Activated B cell treated with CpG ODN at 0.5 μM for 24 hours (primary cell): ENCODE measurements at regions of chr12 and their contacts with region 1.

Region 1: GRCh38 chr12:79900951-79901350 is 33.9 kb downstream of the PPP1R12A start:
- DNase-seq: no peak
- ATAC-seq: no peak
- H3K4me3 Mint-ChIP-seq: no peak overlapping the region
- H3K27ac Mint-ChIP-seq: no peak overlapping the region
- H3K4me1 Mint-ChIP-seq: peaks cover 51% of the 10 kb centered on the region
- H3K27me3 Mint-ChIP-seq: no peaks in the 10 kb centered on the region
- CTCF ChIP-seq: no peak

Region 2: DNA sequence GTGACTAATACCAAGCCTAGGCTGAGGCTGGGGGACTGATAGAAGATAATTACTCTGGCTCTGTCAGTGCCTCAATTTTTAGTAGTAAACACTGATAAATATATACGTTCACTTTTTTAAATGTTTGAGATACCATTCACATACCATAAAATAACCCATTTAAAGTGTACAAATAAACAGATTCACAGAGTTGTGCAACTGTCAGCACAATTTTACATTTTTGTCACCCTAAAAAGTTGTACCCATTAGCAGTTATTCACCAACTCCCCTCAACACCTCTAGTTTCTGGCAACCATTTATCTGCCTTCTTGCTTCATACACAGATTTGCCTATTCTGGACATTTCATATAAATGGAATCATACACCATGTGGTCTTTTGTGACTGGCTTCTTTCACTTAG is 18.8 kb after region 1 on chr12:
- CTCF ChIA-PET with region 1: no interaction called
- POLR2A ChIA-PET with region 1: no interaction called
- intact Hi-C with region 1: loop called (anchors 2 kb)
- DNase-seq: no peak
- ATAC-seq: no peak
- H3K4me3 Mint-ChIP-seq: no peak overlapping the region
- H3K27ac Mint-ChIP-seq: no peak overlapping the region
- H3K4me1 Mint-ChIP-seq: peaks cover 71% of the 10 kb centered on the region
- H3K27me3 Mint-ChIP-seq: no peaks in the 10 kb centered on the region
- CTCF ChIP-seq: no peak